MCF 10A (cell line): ENCODE measurements at regions of chr22 and their contacts with region 1.

Region 1: DNA sequence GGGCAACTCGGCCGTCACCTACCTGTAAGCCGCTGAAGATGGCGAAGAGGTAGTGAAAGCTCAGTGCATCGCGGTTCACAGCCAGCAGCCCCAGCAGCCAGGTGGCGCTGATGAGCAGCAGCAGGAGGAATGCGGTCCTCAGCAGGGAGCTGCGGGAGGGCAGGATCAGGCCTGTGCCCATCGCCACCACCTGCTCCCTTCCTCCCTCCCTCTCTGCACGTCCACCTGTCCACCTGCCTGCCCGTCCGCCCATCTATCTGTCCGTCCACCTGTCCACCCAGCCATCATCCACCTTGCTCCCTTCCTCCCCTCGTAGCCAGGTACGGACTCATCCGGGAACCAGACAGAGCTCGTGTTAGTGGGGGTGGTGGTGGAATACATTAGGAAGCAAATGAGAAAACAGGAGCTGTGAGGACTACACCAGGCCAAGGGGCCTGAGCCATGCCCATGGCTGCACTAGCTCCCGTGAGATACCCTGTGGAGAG is 32.2 kb downstream of the TRMU start:
- DNase-seq: peak; percentile 64
- H3K4me3 Mint-ChIP-seq: no peak overlapping the region
- H3K27ac Mint-ChIP-seq: no peak overlapping the region
- H3K4me1 Mint-ChIP-seq: peaks cover 6% of the 10 kb centered on the region
- H3K27me3 Mint-ChIP-seq: no peaks in the 10 kb centered on the region
- CTCF ChIP-seq: peak; percentile 93

Region 2: GRCh38 chr22:46250035-46250782 is 117.5 kb before region 1 on chr22 and contains the start of gene CDPF1:
- CTCF ChIA-PET with region 1: no interaction called
- POLR2A ChIA-PET with region 1: no interaction called
- intact Hi-C with region 1: no loop called
- DNase-seq: peak; percentile 87
- H3K4me3 Mint-ChIP-seq: peak within 1 kb of the TSS; percentile 81
- H3K27ac Mint-ChIP-seq: peak within 1 kb of the TSS; percentile 19
- H3K4me1 Mint-ChIP-seq: peaks cover 5% of the 10 kb centered on the region
- H3K27me3 Mint-ChIP-seq: no peaks in the 10 kb centered on the region
- CTCF ChIP-seq: no peak
- total RNA-seq, gene CDPF1: 6.3 and 9.0 TPM in 2 replicates

Region 3: DNA sequence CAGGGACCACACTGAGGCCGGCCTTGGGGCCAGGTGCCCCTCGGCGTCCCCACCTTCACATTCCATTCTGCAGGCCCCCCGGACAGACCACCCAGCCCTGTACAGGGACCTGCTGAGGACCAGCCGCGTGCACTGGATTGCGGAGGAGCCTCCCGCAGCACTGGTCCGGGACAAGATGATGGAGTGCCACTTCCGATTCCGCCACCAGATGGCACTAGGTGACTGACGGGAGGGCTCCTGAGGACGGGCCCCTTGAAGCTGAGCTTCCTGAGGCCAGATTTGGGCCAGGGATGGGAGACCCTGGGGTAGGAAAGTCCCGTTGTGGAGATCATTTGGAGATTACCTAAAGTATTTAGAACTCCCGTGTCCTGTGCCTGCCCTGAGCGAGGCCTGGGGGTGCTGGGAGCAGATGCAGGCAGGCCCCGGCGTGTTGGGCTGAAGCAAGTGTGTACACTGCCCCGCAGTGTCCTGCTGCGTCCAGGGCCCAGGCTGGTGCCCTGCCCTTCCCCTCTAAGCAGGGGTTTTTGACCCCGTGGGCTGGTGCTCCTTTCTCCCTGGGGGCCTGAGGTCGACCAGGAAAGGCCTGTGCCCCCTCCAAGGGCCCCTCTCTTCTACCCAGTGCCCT is 12.3 kb before region 1 on chr22:
- CTCF ChIA-PET with region 1: interaction called, 22 read pairs
- POLR2A ChIA-PET with region 1: interaction called, 3 read pairs
- intact Hi-C with region 1: no loop called
- DNase-seq: peak; percentile 68
- H3K4me3 Mint-ChIP-seq: no peak overlapping the region
- H3K27ac Mint-ChIP-seq: peak overlapping the region; percentile 60
- H3K4me1 Mint-ChIP-seq: peaks cover 16% of the 10 kb centered on the region
- H3K27me3 Mint-ChIP-seq: no peaks in the 10 kb centered on the region
- CTCF ChIP-seq: peak; percentile 83

Region 4: DNA sequence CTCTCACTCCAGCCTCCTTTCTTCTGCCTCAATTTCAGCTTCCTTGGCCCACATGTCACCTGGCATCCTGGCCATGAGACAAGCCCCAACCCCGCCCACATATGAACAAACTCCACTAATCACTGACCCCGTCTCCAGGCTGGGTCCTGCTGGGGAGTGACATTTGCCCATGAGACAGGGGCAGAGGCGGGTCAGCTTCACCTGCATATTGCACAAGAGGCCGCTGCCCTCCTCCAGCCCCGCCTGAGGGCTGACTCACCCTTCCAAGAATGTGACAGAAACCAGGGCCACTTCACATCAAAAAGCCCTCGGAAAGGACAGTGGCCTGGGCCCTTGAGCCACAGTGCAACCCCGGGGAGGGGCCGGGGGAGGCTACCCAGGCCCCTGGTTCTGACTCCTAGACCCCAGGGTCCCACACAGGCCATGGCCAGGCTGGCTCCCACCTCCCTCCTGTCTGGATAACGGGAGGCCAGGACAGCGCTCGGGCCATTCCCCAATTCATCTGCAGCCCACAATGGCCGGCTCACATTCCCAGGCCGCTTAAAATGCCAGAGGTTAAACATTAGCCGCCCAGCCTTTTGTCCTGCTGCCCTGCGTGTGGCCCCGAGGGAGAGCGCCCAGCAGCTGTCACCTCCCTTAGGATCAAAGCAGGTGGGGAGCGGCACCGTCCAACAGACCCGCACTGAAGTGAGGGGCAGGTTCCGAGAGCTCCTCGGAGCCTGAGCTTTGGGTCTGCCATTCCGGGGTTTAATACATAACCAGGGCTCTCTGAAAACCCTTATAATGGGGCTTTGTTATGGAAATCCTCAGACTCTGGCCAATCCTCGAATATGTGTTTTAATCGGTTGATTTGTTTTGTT is 10.0 kb after region 1 on chr22:
- CTCF ChIA-PET with region 1: interaction called, 18 read pairs
- POLR2A ChIA-PET with region 1: no interaction called
- intact Hi-C with region 1: no loop called
- DNase-seq: peak; percentile 43
- H3K4me3 Mint-ChIP-seq: no peak overlapping the region
- H3K27ac Mint-ChIP-seq: no peak overlapping the region
- H3K4me1 Mint-ChIP-seq: peaks cover 4% of the 10 kb centered on the region
- H3K27me3 Mint-ChIP-seq: no peaks in the 10 kb centered on the region
- CTCF ChIP-seq: no peak

Region 5: DNA sequence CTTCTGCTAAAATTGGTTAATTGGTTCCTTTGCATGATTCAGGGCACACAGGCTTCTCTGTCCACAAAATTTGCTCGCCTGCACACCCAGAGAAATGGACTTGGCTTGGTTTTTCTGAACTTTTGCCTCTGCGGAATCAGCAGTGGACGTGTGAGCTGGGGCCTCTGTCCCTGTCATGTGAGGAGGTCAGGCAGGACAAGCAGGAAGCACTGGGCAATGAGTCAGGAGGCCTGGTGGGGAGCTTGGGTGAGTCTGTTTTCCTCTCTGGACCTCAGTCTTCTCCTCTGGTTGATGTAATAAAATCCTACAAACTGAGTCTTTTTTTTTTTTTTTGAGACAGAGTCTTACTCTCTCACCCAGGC is 180.1 kb after region 1 on chr22:
- CTCF ChIA-PET with region 1: interaction called, 87 read pairs
- POLR2A ChIA-PET with region 1: interaction called, 21 read pairs
- intact Hi-C with region 1: no loop called
- DNase-seq: no peak
- H3K4me3 Mint-ChIP-seq: peak overlapping the region; percentile 33
- H3K27ac Mint-ChIP-seq: peak overlapping the region; percentile 85
- H3K4me1 Mint-ChIP-seq: peaks cover 21% of the 10 kb centered on the region
- H3K27me3 Mint-ChIP-seq: no peaks in the 10 kb centered on the region
- CTCF ChIP-seq: no peak